ENCODE measurements at regions of chrX and their contacts with region 1.

Region 1: DNA sequence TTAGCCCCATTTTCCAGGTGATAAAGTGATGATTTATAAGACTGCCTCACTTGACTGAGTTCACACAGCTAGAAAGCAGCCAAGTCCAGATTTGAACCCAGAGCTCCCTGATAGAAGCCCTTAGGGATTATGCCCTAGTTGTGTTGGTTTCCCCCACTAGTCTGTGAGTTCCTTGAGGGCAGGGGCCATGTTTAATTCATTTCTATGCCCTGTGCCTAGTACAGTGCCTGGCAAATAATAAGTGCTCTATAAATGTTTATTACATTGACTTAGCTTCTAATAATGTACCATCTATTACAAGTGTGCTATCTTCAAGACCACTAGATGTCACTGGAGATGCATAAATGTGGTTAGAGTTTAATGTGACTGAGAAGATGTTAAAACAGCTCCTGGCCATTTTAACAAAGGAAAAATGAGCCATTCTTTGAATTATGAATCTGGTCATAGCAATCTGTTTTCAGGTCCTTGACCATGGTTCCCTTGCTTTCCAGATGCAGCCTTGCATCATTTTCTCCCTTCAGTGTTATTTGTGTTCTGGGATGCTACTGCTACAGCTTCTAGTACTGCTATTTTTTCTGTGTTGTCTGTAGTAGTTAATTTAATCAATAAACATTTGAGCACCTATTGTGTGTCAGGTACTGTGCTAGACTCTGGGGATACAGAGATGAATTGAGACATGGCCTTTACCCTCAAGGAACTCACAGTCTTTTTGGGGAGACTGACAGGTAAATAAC is 43.2 kb downstream of the SLC9A6 start:
- DNase-seq: no peak
- ATAC-seq: peak in 3 of 4 donors; percentile 16 to 47 (median 36)
- H3K4me3 ChIP-seq: no peak overlapping the region
- H3K27ac ChIP-seq: peak overlapping the region in 8 of 12 donors; percentile 54 to 97 (median 86)
- H3K4me1 ChIP-seq: peaks cover 0 to 34% (median 10%) of the 10 kb centered on the region in 12 donors
- H3K27me3 ChIP-seq: peaks cover 0 to 5% (median 0%) of the 10 kb centered on the region in 9 donors
- CTCF ChIP-seq: peak; percentile 36 to 66 (median 62)
- POLR2A ChIP-seq: no peak

Region 2: DNA sequence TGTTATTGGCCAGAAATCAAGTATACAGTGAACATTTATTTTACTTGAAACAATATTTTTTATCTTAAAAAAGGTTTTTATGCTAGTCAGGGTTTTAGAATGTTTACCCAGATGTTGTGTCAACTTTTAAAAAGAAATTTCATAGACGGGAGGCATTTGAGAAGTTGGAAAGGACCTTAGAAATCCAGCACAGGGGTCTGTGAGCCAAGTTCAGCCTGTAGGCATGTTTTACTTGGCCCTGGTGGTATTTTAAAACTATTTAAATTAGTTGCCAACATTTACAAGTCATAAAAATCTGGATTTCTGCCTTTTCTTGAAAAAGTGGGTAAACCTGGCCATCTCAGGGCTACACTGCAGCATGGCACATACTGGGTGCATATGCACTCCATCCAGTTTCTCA is 93.4 kb after region 1 on chrX:
- intact Hi-C with region 1: loop called in 1 of 10 experiments (anchors 5 kb)
- DNase-seq: no peak
- ATAC-seq: no peak
- H3K4me3 ChIP-seq: no peak overlapping the region
- H3K27ac ChIP-seq: peak overlapping the region in 3 of 12 donors; percentile 19 to 68 (median 38)
- H3K4me1 ChIP-seq: peaks cover 0 to 10% (median 1%) of the 10 kb centered on the region in 12 donors
- H3K27me3 ChIP-seq: no peaks in the 10 kb centered on the region
- CTCF ChIP-seq: no peak
- POLR2A ChIP-seq: no peak

Region 3: DNA sequence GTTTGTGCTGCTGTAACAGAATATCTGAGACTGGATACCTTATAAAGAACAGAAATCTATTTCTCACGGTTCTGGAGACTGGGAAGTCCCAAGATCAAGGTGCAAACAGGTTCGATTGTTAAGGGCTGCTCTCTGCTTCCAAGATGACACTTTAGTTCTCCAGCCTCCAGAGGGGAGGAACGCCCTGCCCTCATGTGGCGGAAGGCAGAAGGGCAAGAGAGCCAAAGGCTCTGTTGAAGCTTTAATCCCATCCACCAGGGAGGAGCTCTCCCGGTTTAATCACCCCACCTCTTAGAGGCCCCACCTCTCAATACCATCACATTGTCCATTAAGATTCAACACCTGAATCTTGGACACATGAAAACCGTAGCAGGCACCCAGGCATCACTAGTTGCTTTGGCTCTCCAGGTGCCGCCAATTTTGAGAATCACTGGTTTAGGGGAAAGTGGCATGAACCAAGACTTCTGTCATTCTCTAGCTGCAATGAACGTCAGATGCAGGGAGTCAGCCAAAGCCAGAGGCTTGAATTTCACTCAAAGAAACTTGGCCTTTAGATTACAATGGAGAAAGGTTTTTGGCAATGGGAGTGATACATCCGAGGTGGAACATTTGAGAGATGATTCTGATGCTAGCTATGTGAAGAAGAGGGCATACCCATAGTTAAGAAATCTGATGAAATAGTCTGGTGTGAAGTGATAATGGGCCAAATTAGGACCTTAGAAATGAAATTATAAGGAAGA is 134.6 kb after region 1 on chrX:
- intact Hi-C with region 1: loop called (anchors 1 to 5 kb)
- DNase-seq: peak; percentile 47 to 70 (median 63)
- ATAC-seq: peak; percentile 41 to 80 (median 78)
- H3K4me3 ChIP-seq: peak overlapping the region in 1 of 12 donors; percentile 0
- H3K27ac ChIP-seq: peak overlapping the region in 10 of 12 donors; percentile 9 to 87 (median 56)
- H3K4me1 ChIP-seq: peaks cover 0 to 76% (median 11%) of the 10 kb centered on the region in 12 donors
- H3K27me3 ChIP-seq: peaks cover 0 to 8% (median 0%) of the 10 kb centered on the region in 9 donors
- CTCF ChIP-seq: peak; percentile 47 to 78 (median 66)
- POLR2A ChIP-seq: no peak

Region 4: DNA sequence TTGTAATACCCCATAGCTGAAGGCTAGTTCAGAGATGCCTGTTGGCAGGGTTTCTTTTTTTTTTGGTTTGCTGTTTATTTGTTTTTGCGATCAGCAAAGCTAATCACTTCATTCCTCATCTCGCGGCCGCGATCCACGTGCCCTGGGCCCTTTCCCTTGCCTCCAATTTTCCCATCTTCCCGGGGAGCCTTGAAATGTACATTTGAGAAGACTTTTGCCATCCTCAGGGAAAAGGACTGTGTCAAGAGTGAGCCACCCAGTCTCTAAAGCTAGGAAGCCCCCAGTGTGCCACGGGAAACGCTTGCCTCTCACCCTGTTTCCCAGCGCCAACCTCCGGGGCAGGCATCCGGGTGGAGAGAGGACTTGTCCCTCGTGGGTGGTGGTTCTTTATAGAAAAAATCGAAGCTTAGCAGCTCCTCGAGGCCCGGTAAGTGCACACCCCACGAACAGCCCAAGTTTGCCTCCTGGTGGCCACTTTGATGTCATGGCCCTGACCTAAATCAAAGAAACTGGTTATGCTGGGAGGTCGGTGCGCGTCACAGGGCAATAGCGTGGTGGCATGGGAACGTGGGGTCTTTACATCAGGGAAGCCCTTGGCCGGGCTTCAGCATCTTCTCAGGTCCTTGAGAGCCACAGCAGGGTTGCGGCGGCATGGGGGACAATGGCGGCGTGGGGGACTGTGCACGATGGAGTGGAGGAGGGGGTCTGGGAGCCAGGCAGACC is 180.8 kb after region 1 on chrX:
- intact Hi-C with region 1: loop called in 8 of 10 experiments (anchors 2 to 5 kb)
- DNase-seq: peak; percentile 48 to 64 (median 57)
- ATAC-seq: peak in 3 of 4 donors; percentile 19 to 35 (median 21)
- H3K4me3 ChIP-seq: no peak overlapping the region
- H3K27ac ChIP-seq: peak overlapping the region in 11 of 12 donors; percentile 33 to 88 (median 65)
- H3K4me1 ChIP-seq: peaks cover 0 to 73% (median 24%) of the 10 kb centered on the region in 12 donors
- H3K27me3 ChIP-seq: peaks cover 0 to 3% (median 0%) of the 10 kb centered on the region in 9 donors
- CTCF ChIP-seq: peak; percentile 34 to 64 (median 50)
- POLR2A ChIP-seq: no peak

Region 5: DNA sequence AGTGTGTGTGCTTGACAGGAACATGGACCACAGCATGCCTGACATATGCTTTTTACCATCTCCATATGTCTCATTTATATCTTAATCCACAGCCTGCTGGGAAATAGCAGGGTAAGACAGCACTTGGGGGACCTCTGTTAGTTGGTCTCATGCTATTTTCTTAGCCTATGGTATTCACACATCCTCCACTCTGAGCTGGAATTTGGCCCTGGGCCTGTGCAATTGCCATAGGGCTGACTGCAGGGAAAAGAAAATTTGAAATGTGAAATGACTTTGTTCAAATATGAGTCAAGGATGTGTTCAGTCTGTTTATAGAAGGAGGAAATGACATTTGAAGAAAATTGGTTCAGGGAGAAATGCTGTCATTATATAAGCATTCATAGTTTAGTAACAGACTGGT is 232.4 kb after region 1 on chrX:
- intact Hi-C with region 1: loop called in 7 of 10 experiments (anchors 5 kb)
- DNase-seq: no peak
- ATAC-seq: no peak
- H3K4me3 ChIP-seq: no peak overlapping the region
- H3K27ac ChIP-seq: no peak overlapping the region
- H3K4me1 ChIP-seq: peaks cover 0 to 19% (median 3%) of the 10 kb centered on the region in 12 donors
- H3K27me3 ChIP-seq: peaks cover 0 to 5% (median 0%) of the 10 kb centered on the region in 9 donors
- CTCF ChIP-seq: no peak
- POLR2A ChIP-seq: no peak

Region 6: DNA sequence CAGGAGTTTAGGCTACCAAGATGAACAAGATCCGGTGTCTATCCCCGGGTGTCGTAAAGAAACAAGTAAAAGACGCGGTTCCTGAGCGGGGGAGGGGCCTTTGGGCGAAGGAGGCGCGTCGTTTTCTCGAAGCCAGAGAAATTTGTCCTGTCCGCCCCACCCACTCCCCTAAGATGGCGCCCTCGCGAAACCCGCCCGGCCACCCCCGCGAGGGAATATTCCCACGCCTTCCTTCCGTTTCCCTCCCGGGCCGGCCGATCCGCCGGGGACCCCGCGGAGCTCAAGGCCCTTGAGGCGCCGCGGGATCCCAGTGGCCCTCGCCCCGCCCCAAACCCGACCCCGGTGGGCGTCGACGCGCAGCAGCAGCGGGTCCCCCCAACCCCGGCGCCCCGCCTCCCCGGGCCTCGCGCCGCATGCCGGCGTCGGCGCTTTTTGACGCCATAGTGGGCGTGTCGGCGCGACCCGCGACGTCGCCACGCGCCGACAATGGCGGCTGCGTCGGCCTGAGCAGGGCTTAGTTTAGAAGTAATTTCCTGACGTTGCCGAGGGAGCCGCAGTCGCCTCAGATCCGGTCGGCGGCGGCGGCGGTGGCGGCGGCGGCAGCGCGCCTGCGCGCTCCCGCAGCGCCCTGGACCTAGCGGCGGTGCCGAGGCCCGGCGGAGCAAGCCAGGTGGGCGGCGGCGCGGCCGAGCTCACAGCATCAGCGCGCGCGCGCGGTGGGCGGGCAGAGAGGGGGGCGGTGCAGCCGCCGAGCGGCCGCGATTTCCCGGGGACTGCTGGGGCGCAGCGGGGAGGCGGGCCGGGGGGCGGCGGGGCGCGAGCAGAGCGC is 468.6 kb after region 1 on chrX and contains the start of gene HTATSF1:
- intact Hi-C with region 1: loop called in 1 of 10 experiments (anchors 5 kb)
- DNase-seq: peak; percentile 83 to 89 (median 86)
- ATAC-seq: peak; percentile 78 to 95 (median 92)
- H3K4me3 ChIP-seq: peak within 1 kb of the TSS; percentile 46 to 95 (median 69)
- H3K27ac ChIP-seq: peak within 1 kb of the TSS; percentile 89 to 98 (median 94)
- H3K4me1 ChIP-seq: peaks cover 0 to 21% (median 4%) of the 10 kb centered on the region in 12 donors
- H3K27me3 ChIP-seq: peaks cover 0 to 9% (median 0%) of the 10 kb centered on the region in 9 donors
- CTCF ChIP-seq: no peak
- POLR2A ChIP-seq: peak in 1 of 2 donors; percentile 16
- total RNA-seq, gene HTATSF1: 49.8 to 83.0 (median 66.7) TPM

Measured in heart left ventricle (tissue), 16 donors.